RWPE1 (cell line): ENCODE measurements at regions of chr20 and their contacts with region 1.

Region 1: GRCh38 chr20:62808211-62808865 is 3.7 kb downstream of the OGFR start:
- DNase-seq: peak; percentile 84
- H3K27ac ChIP-seq: peak overlapping the region; percentile 97
- CTCF ChIP-seq: peak; percentile 99

Region 2: DNA sequence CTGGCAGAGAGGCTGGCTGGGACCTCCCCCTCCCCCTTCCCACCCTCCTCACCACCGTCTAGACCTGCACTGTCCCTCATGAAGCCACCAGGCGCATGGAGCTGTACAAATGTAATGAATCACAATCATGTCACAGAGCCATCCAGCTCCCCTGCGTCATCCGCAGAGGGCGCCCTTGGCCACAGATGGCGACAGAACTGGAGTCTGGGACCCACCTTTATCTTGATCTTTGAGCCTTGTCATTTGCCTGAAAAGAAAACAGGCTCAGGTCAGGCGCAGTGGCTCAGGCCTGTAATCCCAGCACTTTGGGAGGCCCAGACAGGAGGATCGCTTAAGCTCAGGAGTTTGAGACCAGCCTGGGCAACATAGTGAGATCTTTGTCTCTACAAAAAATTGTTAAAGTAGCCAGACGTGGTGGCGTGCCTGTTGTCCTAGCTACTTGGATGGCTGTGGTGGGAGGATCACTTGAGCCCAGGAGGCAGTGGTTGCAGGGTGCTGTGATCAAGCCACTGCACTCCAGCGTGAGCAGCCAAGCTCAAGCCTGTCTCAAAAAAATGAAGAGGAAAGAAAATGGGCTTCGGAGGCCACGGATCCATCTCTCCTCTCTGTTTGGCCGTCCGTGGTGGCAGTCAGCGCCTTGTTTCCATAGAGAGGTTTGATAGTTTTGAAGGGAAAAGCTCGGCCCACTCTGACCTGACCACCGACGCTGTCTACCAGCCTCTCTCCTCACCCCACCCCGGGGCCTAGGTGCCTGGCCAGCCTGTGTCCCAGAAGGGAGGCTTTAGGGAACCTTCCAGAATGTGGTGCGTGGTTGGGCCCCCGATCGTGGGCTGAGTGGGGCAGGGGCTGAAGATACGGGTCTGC is 14.7 kb after region 1 on chr20:
- CTCF ChIA-PET with region 1: interaction called, 14 read pairs
- POLR2A ChIA-PET with region 1: no interaction called
- DNase-seq: peak; percentile 55
- H3K27ac ChIP-seq: peak overlapping the region; percentile 47
- CTCF ChIP-seq: peak; percentile 65

Region 3: GRCh38 chr20:62937366-62938104 is 129.2 kb after region 1 on chr20:
- CTCF ChIA-PET with region 1: no interaction called
- POLR2A ChIA-PET with region 1: no interaction called
- DNase-seq: peak; percentile 99
- H3K27ac ChIP-seq: peak overlapping the region; percentile 90
- CTCF ChIP-seq: no peak

Region 4: DNA sequence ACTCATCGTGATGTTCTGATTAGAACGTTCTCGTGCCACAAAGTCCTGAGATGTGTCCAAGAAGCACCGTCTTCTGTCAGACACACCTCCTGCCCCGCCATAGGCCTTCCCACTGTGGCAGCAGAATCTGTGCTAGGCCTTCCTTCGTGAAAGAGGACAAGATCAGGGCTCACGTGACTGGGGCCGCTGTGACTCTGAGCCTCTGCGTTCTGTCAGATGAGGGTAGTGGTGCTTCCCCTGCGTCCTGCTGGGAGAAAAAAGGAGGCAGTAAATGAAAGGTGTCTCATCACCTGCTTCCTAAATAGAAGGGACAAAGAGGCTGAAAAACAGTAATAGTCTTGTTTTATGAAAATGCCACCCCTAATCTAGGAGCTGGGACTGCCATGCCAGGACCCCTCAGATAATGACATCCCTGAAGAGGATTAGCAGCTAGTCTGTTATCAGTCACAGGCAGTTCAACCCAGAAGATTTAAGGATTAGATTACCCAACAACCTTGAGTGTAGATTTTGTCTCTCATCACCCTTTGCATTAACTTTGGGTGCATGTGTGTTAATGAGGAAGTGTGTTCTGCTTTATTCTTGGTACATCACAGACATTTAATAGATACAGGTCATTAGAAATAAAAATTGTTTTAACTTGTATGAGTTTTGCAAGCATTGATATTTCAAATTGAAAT is 1090.7 kb after region 1 on chr20:
- CTCF ChIA-PET with region 1: no interaction called
- POLR2A ChIA-PET with region 1: interaction called, 11 read pairs
- DNase-seq: no peak
- H3K27ac ChIP-seq: peak overlapping the region; percentile 23
- CTCF ChIP-seq: no peak